ENCODE measurements at regions of chr6 and their contacts with region 1.

Region 1: DNA sequence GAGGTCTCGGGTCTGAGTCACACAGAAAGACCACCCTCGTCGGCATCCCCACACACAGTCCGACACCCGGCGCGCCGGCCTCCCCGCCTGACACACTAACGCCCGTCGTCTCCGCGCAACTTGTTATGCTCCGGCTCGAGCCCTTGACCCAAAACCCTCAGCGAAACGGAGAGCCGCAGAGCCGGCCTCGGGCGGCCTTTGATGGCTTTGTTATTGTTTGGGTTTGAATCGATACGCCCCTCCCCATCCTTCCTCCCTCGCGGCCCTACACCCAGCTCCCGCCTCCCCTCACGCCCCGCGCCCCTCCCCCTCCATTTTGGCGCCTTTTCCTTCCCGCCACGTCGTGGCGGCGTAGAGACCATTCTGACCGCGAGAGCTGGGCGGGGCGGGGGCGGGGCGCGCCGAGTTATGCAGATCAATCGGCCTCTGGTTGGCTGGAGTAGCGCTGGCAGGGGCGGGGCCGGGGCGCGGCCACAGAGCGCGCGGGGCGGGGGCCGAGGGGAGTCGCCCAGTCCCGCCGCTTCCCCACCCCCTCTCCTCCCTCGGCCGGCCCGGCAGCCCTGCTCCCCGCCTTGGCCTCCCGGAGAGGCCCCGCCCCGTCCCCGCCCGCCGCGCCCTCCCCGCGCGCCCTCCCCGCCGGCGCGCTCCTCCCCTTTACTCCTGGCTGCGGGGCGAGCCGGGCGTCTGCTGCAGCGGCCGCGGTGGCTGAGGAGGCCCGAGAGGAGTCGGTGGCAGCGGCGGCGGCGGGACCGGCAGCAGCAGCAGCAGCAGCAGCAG is at the start of gene PIM1:
- DNase-seq: peak; percentile 81 to 99 (median 97)
- ATAC-seq: peak; percentile 68 to 83
- H3K4me3 Mint-ChIP-seq: peak within 1 kb of the TSS; percentile 93 to 99 (median 97)
- H3K27ac Mint-ChIP-seq: peak within 1 kb of the TSS; percentile 87 to 99 (median 96)
- H3K4me1 Mint-ChIP-seq: peaks cover 25 to 53% (median 40%) of the 10 kb centered on the region in 4 donors
- H3K27me3 Mint-ChIP-seq: no peaks in the 10 kb centered on the region
- polyA plus RNA-seq, gene PIM1: 106 to 196 (median 182) TPM

Region 2: GRCh38 chr6:36985808-36986703 is 183.6 kb before region 1 on chr6 and contains the start of gene MTCH1:
- POLR2A ChIA-PET with region 1: interaction called, 21 read pairs
- DNase-seq: peak; percentile 79 to 97 (median 90)
- ATAC-seq: peak; percentile 85 to 94
- H3K4me3 Mint-ChIP-seq: peak within 1 kb of the TSS in 9 of 10 donors; percentile 92 to 100 (median 99)
- H3K27ac Mint-ChIP-seq: peak within 1 kb of the TSS; percentile 94 to 99 (median 97)
- H3K4me1 Mint-ChIP-seq: peaks cover 19 to 30% (median 25%) of the 10 kb centered on the region in 4 donors
- H3K27me3 Mint-ChIP-seq: no peaks in the 10 kb centered on the region
- polyA plus RNA-seq, gene MTCH1: 63.2 to 78.3 (median 74.8) TPM

Region 3: GRCh38 chr6:37051138-37052026 is 118.3 kb before region 1 on chr6:
- POLR2A ChIA-PET with region 1: interaction called, 186 read pairs
- DNase-seq: peak; percentile 73 to 91 (median 84)
- ATAC-seq: peak; percentile 71 to 78
- H3K4me3 Mint-ChIP-seq: peak overlapping the region; percentile 50 to 91 (median 75)
- H3K27ac Mint-ChIP-seq: peak overlapping the region; percentile 81 to 98 (median 94)
- H3K4me1 Mint-ChIP-seq: peaks cover 38 to 70% (median 61%) of the 10 kb centered on the region in 4 donors
- H3K27me3 Mint-ChIP-seq: no peaks in the 10 kb centered on the region

Region 4: DNA sequence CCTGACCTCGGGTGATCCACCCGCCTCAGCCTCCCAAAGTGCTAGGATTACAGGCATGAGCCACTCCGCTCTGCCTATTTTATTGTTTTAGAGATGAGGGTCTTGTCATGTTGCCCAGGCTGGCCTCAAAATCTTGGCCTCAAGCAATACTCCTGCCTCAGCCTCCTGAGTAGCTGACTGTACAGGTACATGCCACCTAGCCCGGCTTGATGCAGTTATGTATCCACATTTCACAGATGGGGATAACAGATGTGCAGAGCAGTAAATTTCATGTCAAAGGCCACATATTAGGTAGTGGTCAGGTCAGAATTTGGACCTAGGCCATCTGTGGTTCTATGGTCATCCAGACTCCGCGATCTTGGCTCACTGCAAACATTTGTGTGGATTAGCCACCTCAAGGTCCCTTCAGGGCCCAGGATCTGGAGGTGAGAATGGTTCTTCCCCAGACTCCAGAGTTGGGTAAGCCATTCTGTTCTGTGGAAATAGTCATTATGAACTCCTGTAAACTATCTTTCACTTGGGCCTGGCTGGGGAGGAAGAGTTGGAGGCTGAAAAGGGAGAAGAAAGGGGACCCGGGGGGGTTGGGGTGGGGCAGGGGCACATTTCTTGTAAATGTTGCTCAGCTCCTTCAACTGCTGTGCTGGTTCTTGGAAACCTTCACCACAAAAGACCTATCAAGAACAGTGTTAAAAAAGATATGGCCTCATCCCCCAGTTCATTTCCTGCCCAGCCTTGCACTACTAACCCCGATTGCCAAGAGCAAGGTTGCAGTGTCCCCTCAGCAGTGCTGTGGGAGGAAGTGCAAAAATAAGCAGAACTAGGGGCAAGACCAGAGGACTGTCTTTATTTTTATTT is 13.3 kb after region 1 on chr6:
- POLR2A ChIA-PET with region 1: interaction called, 27 read pairs
- DNase-seq: peak in 9 of 10 donors; percentile 54 to 81 (median 62)
- ATAC-seq: peak; percentile 94 to 99
- H3K4me3 Mint-ChIP-seq: peak overlapping the region; percentile 48 to 85 (median 68)
- H3K27ac Mint-ChIP-seq: peak overlapping the region; percentile 84 to 99 (median 92)
- H3K4me1 Mint-ChIP-seq: peaks cover 18 to 72% (median 56%) of the 10 kb centered on the region in 4 donors
- H3K27me3 Mint-ChIP-seq: no peaks in the 10 kb centered on the region

Region 5: GRCh38 chr6:37207903-37208456 is 38.3 kb after region 1 on chr6:
- POLR2A ChIA-PET with region 1: interaction called, 76 read pairs
- DNase-seq: peak; percentile 66 to 94 (median 83)
- ATAC-seq: peak; percentile 55 to 74
- H3K4me3 Mint-ChIP-seq: peak overlapping the region in 9 of 10 donors; percentile 54 to 81 (median 66)
- H3K27ac Mint-ChIP-seq: peak overlapping the region; percentile 83 to 94 (median 91)
- H3K4me1 Mint-ChIP-seq: peaks cover 34 to 63% (median 61%) of the 10 kb centered on the region in 4 donors
- H3K27me3 Mint-ChIP-seq: peaks cover 0 to 2% (median 0%) of the 10 kb centered on the region in 5 donors

Measured in naive thymus-derived CD8-positive, alpha-beta T cell (primary cell).